ENCODE measurements at regions of chr3 and their contacts with region 1.

Region 1: GRCh38 chr3:98322101-98322500 is 31.6 kb upstream of the OR5K4 start:
- DNase-seq: no peak
- H3K4me3 ChIP-seq: no peak overlapping the region
- H3K4me3 Mint-ChIP-seq: no peak overlapping the region
- H3K27ac Mint-ChIP-seq: no peak overlapping the region
- H3K4me1 ChIP-seq: no peaks in the 10 kb centered on the region
- H3K4me1 Mint-ChIP-seq: peaks cover 13% of the 10 kb centered on the region
- H3K27me3 ChIP-seq: no peaks in the 10 kb centered on the region
- H3K27me3 Mint-ChIP-seq: no peaks in the 10 kb centered on the region
- CTCF ChIP-seq: no peak

Region 2: DNA sequence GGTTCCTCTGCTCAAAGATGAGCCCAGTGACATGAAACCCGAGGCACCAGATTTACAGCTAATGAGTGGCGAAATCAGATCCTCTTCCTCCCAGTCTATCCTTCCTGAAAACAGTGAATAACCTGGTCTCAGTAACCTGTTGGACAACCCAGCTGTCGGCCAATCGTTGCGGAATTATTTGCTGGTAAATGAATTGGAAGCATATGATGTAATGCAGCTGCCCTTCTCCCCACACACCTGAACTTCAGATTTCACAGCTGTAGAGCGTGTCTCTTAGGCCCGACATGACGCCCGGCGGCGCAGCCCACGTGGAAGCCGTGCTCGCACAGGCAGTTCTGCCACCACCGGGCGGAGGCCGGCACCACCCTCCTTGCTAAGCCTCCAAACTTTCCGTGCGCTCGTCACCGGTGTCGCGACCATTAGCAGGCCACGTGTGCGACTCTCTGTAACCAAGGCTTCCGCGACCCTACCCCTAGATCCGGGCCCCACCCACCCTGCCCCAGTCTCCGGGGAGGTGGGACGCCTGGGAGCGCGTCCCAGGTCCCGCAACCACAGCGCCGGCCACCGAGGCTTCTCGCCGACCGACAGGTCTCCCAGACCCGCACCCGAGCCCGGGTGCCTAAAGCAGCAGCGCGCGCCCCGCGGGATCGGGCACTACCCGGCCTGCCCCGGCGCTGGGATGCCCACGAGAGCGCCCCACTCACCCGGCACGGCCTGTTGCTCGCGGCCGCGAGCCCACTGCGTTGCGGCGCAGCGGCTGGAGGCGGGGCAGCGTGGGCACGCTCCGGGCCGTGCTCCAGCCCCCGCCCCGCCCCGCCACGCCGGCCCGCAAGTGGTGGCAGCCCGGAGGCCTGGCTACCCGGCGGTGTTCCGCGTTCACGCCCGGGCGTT is 350.2 kb before region 1 on chr3 and contains the start of gene RIOX2:
- CTCF ChIA-PET with region 1: no interaction called
- POLR2A ChIA-PET with region 1: no interaction called
- intact Hi-C with region 1: no loop called
- DNase-seq: peak; percentile 76 to 78
- H3K4me3 ChIP-seq: peak within 1 kb of the TSS; percentile 81
- H3K4me3 Mint-ChIP-seq: peak within 1 kb of the TSS; percentile 88
- H3K27ac Mint-ChIP-seq: peak within 1 kb of the TSS; percentile 94
- H3K4me1 ChIP-seq: peaks cover 20% of the 10 kb centered on the region
- H3K4me1 Mint-ChIP-seq: peaks cover 13% of the 10 kb centered on the region
- H3K27me3 ChIP-seq: no peaks in the 10 kb centered on the region
- H3K27me3 Mint-ChIP-seq: no peaks in the 10 kb centered on the region
- CTCF ChIP-seq: peak in 1 of 2 experiments; percentile 12
- total RNA-seq, gene RIOX2: 25.0 TPM in 2 replicates

Region 3: GRCh38 chr3:98171066-98171465 is 151.0 kb before region 1 on chr3:
- CTCF ChIA-PET with region 1: interaction called, 10 read pairs
- POLR2A ChIA-PET with region 1: no interaction called
- intact Hi-C with region 1: no loop called
- DNase-seq: no peak
- H3K4me3 ChIP-seq: no peak overlapping the region
- H3K4me3 Mint-ChIP-seq: no peak overlapping the region
- H3K27ac Mint-ChIP-seq: no peak overlapping the region
- H3K4me1 ChIP-seq: no peaks in the 10 kb centered on the region
- H3K4me1 Mint-ChIP-seq: no peaks in the 10 kb centered on the region
- H3K27me3 ChIP-seq: no peaks in the 10 kb centered on the region
- H3K27me3 Mint-ChIP-seq: no peaks in the 10 kb centered on the region
- CTCF ChIP-seq: no peak